OCI-LY7 (cell line): ENCODE measurements at regions of chr4 and their contacts with region 1.

Region 1: DNA sequence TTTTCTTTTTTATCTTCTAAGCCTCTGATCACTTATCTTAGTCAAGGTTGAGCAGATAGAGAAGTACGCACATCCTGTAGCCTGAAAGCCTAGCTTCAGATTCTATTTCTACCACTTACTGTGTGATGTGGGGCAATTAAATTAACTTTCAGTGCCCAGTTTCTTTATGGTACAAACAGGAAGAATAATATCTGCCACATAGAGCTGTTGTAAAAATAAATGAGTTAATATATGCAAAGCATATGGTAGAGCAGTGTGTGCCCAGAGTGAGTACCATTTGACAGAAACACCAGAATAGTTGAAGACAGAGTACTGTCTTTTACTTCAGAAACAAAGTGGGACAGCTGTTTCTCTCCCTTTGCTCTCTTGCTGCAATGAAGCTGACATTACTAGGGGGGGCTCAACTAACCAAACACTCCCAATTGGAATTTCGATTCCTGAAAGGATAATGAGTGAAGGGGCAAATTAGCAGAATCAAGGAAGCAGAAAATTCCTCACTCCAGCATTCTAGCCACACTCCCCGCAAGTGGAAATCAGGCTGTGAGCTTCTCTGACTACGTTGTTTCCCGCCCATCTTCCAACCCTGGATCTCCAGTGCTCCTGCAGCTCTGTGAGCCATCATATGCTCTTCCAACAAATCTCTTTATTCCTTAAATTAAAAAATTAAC is 80.4 kb downstream of the MAPK10 start:
- DNase-seq: no peak
- H3K4me3 ChIP-seq: no peak overlapping the region
- H3K27ac ChIP-seq: no peak overlapping the region
- H3K4me1 ChIP-seq: no peaks in the 10 kb centered on the region
- CTCF ChIP-seq: no peak

Region 2: DNA sequence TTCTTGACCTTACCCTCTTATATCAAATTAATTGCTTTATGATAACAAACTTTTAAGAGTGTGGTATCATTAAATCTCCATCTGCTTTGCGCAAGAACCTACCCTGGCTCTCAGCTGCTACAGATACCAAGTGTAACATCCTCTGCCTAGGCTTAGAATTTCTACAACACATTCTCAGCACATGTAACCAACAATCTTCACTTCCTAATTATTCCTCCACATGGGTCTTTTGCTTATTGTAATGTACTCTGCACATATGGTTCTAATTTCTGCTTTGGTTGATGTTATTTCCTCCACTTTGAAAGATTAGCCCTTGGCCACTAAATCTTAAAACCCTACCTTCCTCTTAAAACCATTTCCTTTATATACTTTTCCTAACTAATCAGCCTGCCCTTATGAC is 562.1 kb before region 1 on chr4:
- CTCF ChIA-PET with region 1: no interaction called
- POLR2A ChIA-PET with region 1: no interaction called
- intact Hi-C with region 1: loop called (anchors 10 kb)
- DNase-seq: peak; percentile 24
- H3K4me3 ChIP-seq: no peak overlapping the region
- H3K27ac ChIP-seq: peak overlapping the region; percentile 8
- H3K4me1 ChIP-seq: peaks cover 52% of the 10 kb centered on the region
- CTCF ChIP-seq: no peak

Region 3: DNA sequence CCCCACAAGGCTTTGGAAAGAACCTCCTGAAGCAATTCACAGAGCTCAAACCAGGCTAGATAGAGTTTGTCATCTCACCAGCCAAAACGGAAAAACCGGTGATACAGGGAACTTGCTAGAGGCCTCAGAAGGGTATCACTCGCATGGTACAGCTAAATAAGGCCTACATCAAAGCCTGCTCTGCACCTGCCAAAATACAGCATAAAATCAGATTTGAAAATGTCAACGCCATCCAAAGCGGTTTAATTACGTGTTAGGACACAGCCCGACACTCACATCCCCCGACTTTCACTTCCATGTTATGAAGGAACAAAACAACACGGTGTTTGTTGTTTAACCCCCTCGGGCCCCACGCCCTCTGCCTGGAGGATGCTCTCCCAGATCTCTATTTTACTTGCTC is 15.5 kb after region 1 on chr4:
- CTCF ChIA-PET with region 1: no interaction called
- POLR2A ChIA-PET with region 1: interaction called, 26 read pairs
- intact Hi-C with region 1: loop called (anchors 2 kb)
- DNase-seq: peak; percentile 40
- H3K4me3 ChIP-seq: no peak overlapping the region
- H3K27ac ChIP-seq: no peak overlapping the region
- H3K4me1 ChIP-seq: peaks cover 10% of the 10 kb centered on the region
- CTCF ChIP-seq: no peak

Region 4: GRCh38 chr4:86359944-86360478 is 80.6 kb after region 1 on chr4 and contains the start of gene MAPK10:
- CTCF ChIA-PET with region 1: no interaction called
- POLR2A ChIA-PET with region 1: interaction called, 9 read pairs
- intact Hi-C with region 1: loop called (anchors 2 kb)
- DNase-seq: peak; percentile 87
- H3K4me3 ChIP-seq: peak within 1 kb of the TSS; percentile 45
- H3K27ac ChIP-seq: no peak within 1 kb of the TSS
- H3K4me1 ChIP-seq: peaks cover 13% of the 10 kb centered on the region
- CTCF ChIP-seq: no peak
- total RNA-seq, gene MAPK10: not detected in 2 replicates

Region 5: GRCh38 chr4:86757468-86757867 is 478.0 kb after region 1 on chr4:
- CTCF ChIA-PET with region 1: no interaction called
- POLR2A ChIA-PET with region 1: no interaction called
- intact Hi-C with region 1: no loop called
- DNase-seq: no peak
- H3K4me3 ChIP-seq: no peak overlapping the region
- H3K27ac ChIP-seq: no peak overlapping the region
- H3K4me1 ChIP-seq: no peaks in the 10 kb centered on the region
- CTCF ChIP-seq: no peak

Region 6: GRCh38 chr4:86957214-86957613 is 677.8 kb after region 1 on chr4:
- CTCF ChIA-PET with region 1: no interaction called
- POLR2A ChIA-PET with region 1: no interaction called
- intact Hi-C with region 1: no loop called
- DNase-seq: no peak
- H3K4me3 ChIP-seq: no peak overlapping the region
- H3K27ac ChIP-seq: peak overlapping the region; percentile 23
- H3K4me1 ChIP-seq: peaks cover 76% of the 10 kb centered on the region
- CTCF ChIP-seq: no peak